CD14-positive monocyte (primary cell): ENCODE measurements at regions of chr3 and their contacts with region 1.

Region 1: DNA sequence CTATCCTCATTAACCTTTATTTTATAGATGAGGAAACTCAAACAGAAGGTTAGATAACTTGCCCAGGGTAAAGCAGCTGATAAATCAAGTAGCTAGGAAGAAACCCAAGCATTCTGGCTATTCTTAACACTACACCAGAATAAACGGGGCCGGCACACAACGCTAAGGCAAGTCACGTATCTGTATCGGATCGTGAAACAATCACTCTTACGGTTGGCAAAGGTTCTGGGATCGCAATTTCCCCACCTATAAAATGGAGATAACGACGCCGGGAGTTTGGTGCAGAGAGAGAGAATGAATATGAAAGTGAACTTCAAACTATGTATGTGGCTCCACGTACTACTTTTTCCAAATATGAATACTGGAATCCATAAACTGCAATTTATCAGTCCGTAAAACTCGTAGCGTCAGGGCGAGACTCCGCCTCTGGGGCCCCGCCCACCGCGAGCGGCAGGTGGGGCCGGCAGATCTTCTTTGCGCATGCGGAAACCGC is 252 bp upstream of the ARMC8 start:
- DNase-seq: peak; percentile 79 to 83 (median 82)
- H3K4me3 ChIP-seq: peak overlapping the region; percentile 64 to 97 (median 95)
- H3K4me3 Mint-ChIP-seq: peak overlapping the region; percentile 92 to 96
- H3K27ac ChIP-seq: peak overlapping the region; percentile 81 to 95
- H3K27ac Mint-ChIP-seq: peak overlapping the region; percentile 90 to 99 (median 98)
- H3K4me1 ChIP-seq: peaks cover 13 to 28% of the 10 kb centered on the region in 2 donors
- H3K4me1 Mint-ChIP-seq: peaks cover 30% of the 10 kb centered on the region
- H3K27me3 ChIP-seq: peaks cover 0 to 2% of the 10 kb centered on the region in 2 donors
- H3K27me3 Mint-ChIP-seq: peaks cover 3 to 10% (median 4%) of the 10 kb centered on the region in 3 donors
- CTCF ChIP-seq: no peak

Region 2: DNA sequence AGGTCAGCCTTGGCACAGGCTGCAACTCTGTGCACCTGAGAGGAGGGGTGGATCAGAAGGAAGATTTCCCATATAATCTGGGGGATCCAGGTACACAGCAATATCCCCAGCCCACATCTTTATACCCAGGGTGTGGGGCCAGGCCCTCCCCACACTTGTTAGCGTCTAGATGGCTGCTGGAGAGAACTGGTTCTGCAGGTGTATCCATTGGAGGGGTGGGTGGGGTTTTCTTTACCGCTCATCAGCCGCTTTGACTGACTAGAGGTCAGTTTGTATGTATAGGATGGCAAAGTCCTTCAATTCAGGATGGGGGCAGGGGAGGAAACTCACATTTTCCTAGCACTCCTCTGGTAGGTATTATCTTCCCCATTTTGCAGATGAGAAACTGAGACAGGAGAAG is 1136.6 kb before region 1 on chr3:
- intact Hi-C with region 1: no loop called
- DNase-seq: no peak
- H3K4me3 ChIP-seq: no peak overlapping the region
- H3K4me3 Mint-ChIP-seq: no peak overlapping the region
- H3K27ac ChIP-seq: no peak overlapping the region
- H3K27ac Mint-ChIP-seq: peak overlapping the region in 1 of 7 donors; percentile 6
- H3K4me1 ChIP-seq: no peaks in the 10 kb centered on the region
- H3K4me1 Mint-ChIP-seq: no peaks in the 10 kb centered on the region
- H3K27me3 ChIP-seq: no peaks in the 10 kb centered on the region
- H3K27me3 Mint-ChIP-seq: peaks cover 0 to 4% (median 2%) of the 10 kb centered on the region in 3 donors
- CTCF ChIP-seq: no peak

Region 3: GRCh38 chr3:137970914-137971831 is 215.7 kb before region 1 on chr3:
- intact Hi-C with region 1: no loop called
- DNase-seq: peak; percentile 4 to 20 (median 16)
- H3K4me3 ChIP-seq: no peak overlapping the region
- H3K4me3 Mint-ChIP-seq: peak overlapping the region in 1 of 2 donors; percentile 28
- H3K27ac ChIP-seq: no peak overlapping the region
- H3K27ac Mint-ChIP-seq: no peak overlapping the region
- H3K4me1 ChIP-seq: no peaks in the 10 kb centered on the region
- H3K4me1 Mint-ChIP-seq: peaks cover 3% of the 10 kb centered on the region
- H3K27me3 ChIP-seq: peaks cover 0 to 4% of the 10 kb centered on the region in 2 donors
- H3K27me3 Mint-ChIP-seq: peaks cover 2 to 4% (median 3%) of the 10 kb centered on the region in 3 donors
- CTCF ChIP-seq: peak; percentile 75

Region 4: GRCh38 chr3:138222131-138222941 is 35.5 kb after region 1 on chr3:
- intact Hi-C with region 1: loop called (anchors 5 kb)
- DNase-seq: peak; percentile 45 to 81 (median 79)
- H3K4me3 ChIP-seq: peak overlapping the region; percentile 36 to 70 (median 44)
- H3K4me3 Mint-ChIP-seq: peak overlapping the region; percentile 61 to 87
- H3K27ac ChIP-seq: peak overlapping the region; percentile 30 to 86
- H3K27ac Mint-ChIP-seq: peak overlapping the region; percentile 92 to 97 (median 96)
- H3K4me1 ChIP-seq: peaks cover 28 to 40% of the 10 kb centered on the region in 2 donors
- H3K4me1 Mint-ChIP-seq: peaks cover 40% of the 10 kb centered on the region
- H3K27me3 ChIP-seq: no peaks in the 10 kb centered on the region
- H3K27me3 Mint-ChIP-seq: no peaks in the 10 kb centered on the region
- CTCF ChIP-seq: no peak